IMR-90 (cell line): ENCODE measurements at regions of chr3 and their contacts with region 1.

Region 1: DNA sequence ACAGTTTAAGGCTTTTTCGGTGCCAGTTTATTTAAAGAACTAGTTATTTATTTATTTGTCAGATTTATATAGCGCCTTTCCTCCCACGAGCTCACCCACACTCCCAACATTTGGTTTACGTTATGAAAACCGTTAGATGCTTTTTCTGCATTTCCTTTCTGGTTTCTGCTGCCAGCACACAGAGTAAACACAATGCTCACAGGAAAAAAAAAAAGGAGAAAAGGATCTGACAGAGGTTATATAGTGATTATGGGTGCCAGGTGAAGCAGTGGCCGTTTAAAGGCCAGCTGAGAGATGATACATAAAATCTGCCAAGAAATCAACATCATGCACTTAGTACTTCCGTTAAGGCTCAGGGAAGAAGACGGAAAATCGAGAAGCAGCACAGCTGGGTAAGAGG is 37.9 kb downstream of the ETV5 start:
- DNase-seq: peak; percentile 16
- ATAC-seq: peak; percentile 32; the same call in 1 of the 2 replicates
- H3K4me3 ChIP-seq: no peak overlapping the region
- H3K27ac ChIP-seq: no peak overlapping the region
- H3K4me1 ChIP-seq: peaks cover 4% of the 10 kb centered on the region; the same call in 1 of the 2 replicates
- H3K27me3 ChIP-seq: no peaks in the 10 kb centered on the region
- CTCF ChIP-seq: no peak
- POLR2A ChIP-seq: no peak
- RAD21 ChIP-seq: no peak

Region 2: GRCh38 chr3:186097663-186098451 is 26.9 kb after region 1 on chr3:
- CTCF ChIA-PET with region 1: no interaction called
- POLR2A ChIA-PET with region 1: no interaction called
- dilution Hi-C with region 1: no loop called
- in situ Hi-C with region 1: no loop called
- intact Hi-C with region 1: loop called (anchors 2 kb)
- DNase-seq: peak; percentile 78
- ATAC-seq: peak; percentile 91
- H3K4me3 ChIP-seq: peak overlapping the region; percentile 25
- H3K27ac ChIP-seq: no peak overlapping the region
- H3K4me1 ChIP-seq: peaks cover 13% of the 10 kb centered on the region
- H3K27me3 ChIP-seq: no peaks in the 10 kb centered on the region
- CTCF ChIP-seq: no peak
- POLR2A ChIP-seq: no peak
- RAD21 ChIP-seq: no peak